KBM-7 (cell line): ENCODE measurements at regions of chr4 and their contacts with region 1.

Region 1: GRCh38 chr4:1746265-1746691 is 25.0 kb downstream of the TACC3 start:
- DNase-seq: peak; percentile 75

Region 2: GRCh38 chr4:1626151-1626550 is 120.1 kb before region 1 on chr4:
- in situ Hi-C with region 1: no loop called
- DNase-seq: no peak

Region 3: GRCh38 chr4:1809754-1810511 is 63.7 kb after region 1 on chr4:
- in situ Hi-C with region 1: loop called (anchors 10 kb)
- DNase-seq: peak; percentile 86